Calu3 (cell line): ENCODE measurements at regions of chr6 and their contacts with region 1.

Region 1: GRCh38 chr6:11144393-11144851 is 32.9 kb upstream of the ERVFRD-1 start:
- DNase-seq: peak; percentile 79
- H3K4me3 Mint-ChIP-seq: no peak overlapping the region
- H3K27ac Mint-ChIP-seq: peak overlapping the region; percentile 95
- H3K4me1 Mint-ChIP-seq: peaks cover 34% of the 10 kb centered on the region
- H3K27me3 Mint-ChIP-seq: no peaks in the 10 kb centered on the region
- CTCF ChIP-seq: peak; percentile 64

Region 2: GRCh38 chr6:11172501-11173332 is 28.3 kb after region 1 on chr6:
- CTCF ChIA-PET with region 1: interaction called, 3 read pairs
- intact Hi-C with region 1: loop called (anchors 1 kb)
- DNase-seq: peak; percentile 68
- H3K4me3 Mint-ChIP-seq: no peak overlapping the region
- H3K27ac Mint-ChIP-seq: no peak overlapping the region
- H3K4me1 Mint-ChIP-seq: peaks cover 26% of the 10 kb centered on the region
- H3K27me3 Mint-ChIP-seq: no peaks in the 10 kb centered on the region
- CTCF ChIP-seq: peak; percentile 66

Region 3: GRCh38 chr6:11575408-11576033 is 431.1 kb after region 1 on chr6:
- CTCF ChIA-PET with region 1: no interaction called
- intact Hi-C with region 1: loop called (anchors 1 kb)
- DNase-seq: peak; percentile 55
- H3K4me3 Mint-ChIP-seq: no peak overlapping the region
- H3K27ac Mint-ChIP-seq: no peak overlapping the region
- H3K4me1 Mint-ChIP-seq: no peaks in the 10 kb centered on the region
- H3K27me3 Mint-ChIP-seq: no peaks in the 10 kb centered on the region
- CTCF ChIP-seq: peak; percentile 70